Gastrocnemius medialis (tissue), 4 donors: ENCODE measurements at regions of chr5 and their contacts with region 1.

Region 1: GRCh38 chr5:14264604-14265316 is 121.6 kb downstream of the TRIO start:
- DNase-seq: peak; percentile 79 to 85
- ATAC-seq: peak; percentile 71 to 73
- H3K4me3 ChIP-seq: peak overlapping the region; percentile 19 to 52 (median 38)
- H3K27ac ChIP-seq: peak overlapping the region in 2 of 4 donors; percentile 27 to 51
- H3K4me1 ChIP-seq: peaks cover 43 to 44% of the 10 kb centered on the region in 2 donors
- H3K27me3 ChIP-seq: no peaks in the 10 kb centered on the region
- CTCF ChIP-seq: no peak
- POLR2A ChIP-seq: peak; percentile 37 to 46

Region 2: DNA sequence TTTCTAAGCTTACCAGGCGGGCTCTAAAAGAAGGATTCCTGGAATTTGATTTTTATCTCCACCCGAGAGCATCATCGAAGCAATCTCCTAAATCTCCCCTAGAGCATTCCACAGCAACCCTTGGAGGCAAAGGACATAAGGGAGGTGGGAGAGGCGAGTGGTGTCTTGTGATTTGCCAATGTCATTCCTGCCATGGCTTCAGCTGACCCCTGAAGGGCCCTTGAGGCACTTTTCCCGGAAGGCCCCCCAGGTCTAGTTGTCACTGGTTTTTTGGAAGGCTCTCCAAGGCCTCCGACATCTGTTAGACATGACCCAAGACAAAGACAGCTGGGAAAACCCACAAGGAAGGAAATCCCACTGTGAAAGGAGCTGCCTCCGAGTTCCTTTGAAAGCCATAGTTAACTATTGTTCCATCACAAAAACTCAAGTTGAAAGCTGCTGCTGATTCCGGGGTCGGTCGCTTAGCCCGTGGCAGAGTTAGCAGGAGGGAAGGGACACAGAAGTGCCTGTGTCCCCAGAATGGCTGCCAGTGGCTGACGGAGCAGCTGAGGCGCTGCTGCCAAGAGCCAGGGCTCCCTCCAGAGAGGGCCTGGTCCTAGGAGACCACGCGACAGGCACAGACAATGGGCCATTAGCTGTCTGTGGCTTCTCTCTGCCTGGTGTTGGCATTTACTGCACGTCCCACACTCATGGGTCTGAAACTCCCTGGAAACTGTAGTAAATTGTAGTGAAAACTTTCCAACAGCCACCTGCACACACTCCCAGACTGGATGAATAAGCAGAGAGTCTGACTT is 146.0 kb before region 1 on chr5:
- in situ Hi-C with region 1: loop called in 2 of 4 experiments (anchors 5 to 10 kb)
- intact Hi-C with region 1: no loop called
- DNase-seq: no peak
- ATAC-seq: no peak
- H3K4me3 ChIP-seq: no peak overlapping the region
- H3K27ac ChIP-seq: no peak overlapping the region
- H3K4me1 ChIP-seq: peaks cover 0 to 5% of the 10 kb centered on the region in 2 donors
- H3K27me3 ChIP-seq: no peaks in the 10 kb centered on the region
- CTCF ChIP-seq: no peak
- POLR2A ChIP-seq: no peak

Region 3: GRCh38 chr5:14131855-14132503 is 132.8 kb before region 1 on chr5:
- in situ Hi-C with region 1: no loop called
- intact Hi-C with region 1: no loop called
- DNase-seq: no peak
- ATAC-seq: peak; percentile 68 to 80
- H3K4me3 ChIP-seq: no peak overlapping the region
- H3K27ac ChIP-seq: no peak overlapping the region
- H3K4me1 ChIP-seq: peaks cover 0 to 3% of the 10 kb centered on the region in 2 donors
- H3K27me3 ChIP-seq: no peaks in the 10 kb centered on the region
- CTCF ChIP-seq: no peak
- POLR2A ChIP-seq: no peak

Region 4: DNA sequence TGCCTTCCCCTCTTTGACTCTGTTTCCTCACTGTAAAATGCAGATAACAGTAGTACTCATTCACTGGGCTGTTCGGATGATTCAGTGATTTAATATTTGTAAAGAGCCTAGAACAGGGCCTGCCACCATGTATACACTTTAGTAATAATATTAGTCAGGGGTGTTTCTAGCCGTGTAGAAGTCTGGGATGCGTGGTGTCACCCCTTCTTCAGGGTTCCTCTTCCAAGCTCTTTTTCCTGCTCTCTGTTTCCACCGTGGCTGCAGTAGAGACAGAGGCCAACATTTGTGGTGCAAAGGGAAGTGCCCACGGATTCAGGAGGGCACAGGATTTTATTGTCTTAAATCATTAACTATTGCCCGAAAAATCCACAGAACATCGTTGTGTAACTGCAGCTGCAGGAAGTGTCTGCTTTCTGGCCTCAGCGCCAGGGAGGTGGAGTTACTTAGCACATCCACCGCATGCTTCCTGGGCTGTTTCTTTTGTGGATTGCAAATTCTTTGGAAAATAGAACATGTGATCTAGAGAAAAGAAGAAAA is 59.9 kb before region 1 on chr5:
- in situ Hi-C with region 1: no loop called
- intact Hi-C with region 1: loop called (anchors 5 kb)
- DNase-seq: peak; percentile 20 to 47
- ATAC-seq: peak; percentile 48 to 61
- H3K4me3 ChIP-seq: peak overlapping the region in 2 of 4 donors; percentile 20 to 30
- H3K27ac ChIP-seq: peak overlapping the region in 3 of 4 donors; percentile 57 to 61 (median 58)
- H3K4me1 ChIP-seq: peaks cover 25 to 45% of the 10 kb centered on the region in 2 donors
- H3K27me3 ChIP-seq: no peaks in the 10 kb centered on the region
- CTCF ChIP-seq: no peak
- POLR2A ChIP-seq: no peak

Region 5: GRCh38 chr5:14379739-14380497 is 115.2 kb after region 1 on chr5:
- in situ Hi-C with region 1: no loop called
- intact Hi-C with region 1: no loop called
- DNase-seq: no peak
- ATAC-seq: no peak
- H3K4me3 ChIP-seq: no peak overlapping the region
- H3K27ac ChIP-seq: no peak overlapping the region
- H3K4me1 ChIP-seq: no peaks in the 10 kb centered on the region
- H3K27me3 ChIP-seq: no peaks in the 10 kb centered on the region
- CTCF ChIP-seq: no peak
- POLR2A ChIP-seq: no peak